ENCODE measurements at regions of chr12 and their contacts with region 1.

Region 1: GRCh38 chr12:95733141-95733825 is 57.3 kb downstream of the NTN4 start:
- DNase-seq: no peak
- H3K4me3 ChIP-seq: no peak overlapping the region
- H3K27ac ChIP-seq: no peak overlapping the region
- H3K4me1 ChIP-seq: no peaks in the 10 kb centered on the region
- H3K27me3 ChIP-seq: no peaks in the 10 kb centered on the region
- CTCF ChIP-seq: no peak
- EP300 ChIP-seq: no peak
- POLR2A ChIP-seq: no peak
- RAD21 ChIP-seq: no peak

Region 2: GRCh38 chr12:95304673-95305198 is 428.5 kb before region 1 on chr12:
- CTCF ChIA-PET with region 1: no interaction called
- POLR2A ChIA-PET with region 1: no interaction called
- DNase-seq: no peak
- H3K4me3 ChIP-seq: no peak overlapping the region
- H3K27ac ChIP-seq: no peak overlapping the region
- H3K4me1 ChIP-seq: no peaks in the 10 kb centered on the region
- H3K27me3 ChIP-seq: peaks cover 0 to 1% (median 0%) of the 10 kb centered on the region in 4 experiments; a peak in 1 of 7 replicates
- CTCF ChIP-seq: no peak
- EP300 ChIP-seq: no peak
- POLR2A ChIP-seq: no peak
- RAD21 ChIP-seq: no peak

Region 3: DNA sequence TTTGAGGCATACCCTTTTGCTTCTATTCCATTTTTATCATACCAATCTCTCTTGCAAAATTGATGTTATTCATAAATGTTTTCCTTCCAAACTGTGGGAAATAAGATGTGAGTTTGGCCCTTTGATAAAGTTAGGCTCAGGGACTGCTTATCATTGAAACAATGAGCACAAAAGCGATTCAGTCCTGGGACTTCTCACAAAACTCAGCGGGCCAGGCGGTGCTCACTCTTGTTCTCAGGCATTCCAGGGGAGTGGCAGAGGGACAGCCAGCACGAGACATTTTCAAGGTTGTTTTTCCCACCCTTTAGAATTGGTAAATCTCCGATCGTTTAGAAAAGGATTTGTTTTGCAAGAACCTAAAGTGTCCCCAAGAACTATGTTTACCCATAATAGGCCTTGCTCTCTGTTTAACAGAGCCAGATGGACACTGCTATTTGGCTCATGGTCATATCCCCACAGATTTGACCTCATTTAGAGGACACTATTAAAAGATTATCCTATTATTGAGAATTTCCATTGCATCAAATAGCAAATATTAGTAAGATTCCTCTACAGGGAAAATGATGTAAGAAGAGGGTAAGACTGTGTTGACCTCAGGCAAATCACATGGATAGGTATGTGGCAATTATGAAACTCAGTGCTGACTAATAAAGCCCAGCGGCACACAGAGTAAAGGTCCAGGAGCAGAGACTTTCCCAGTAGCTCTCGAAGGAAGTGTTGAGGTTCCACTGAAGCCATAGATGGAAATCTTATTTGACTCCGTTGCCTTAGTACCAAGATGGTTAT is 79.3 kb before region 1 on chr12:
- CTCF ChIA-PET with region 1: no interaction called
- POLR2A ChIA-PET with region 1: no interaction called
- DNase-seq: no peak
- H3K4me3 ChIP-seq: no peak overlapping the region
- H3K27ac ChIP-seq: no peak overlapping the region
- H3K4me1 ChIP-seq: no peaks in the 10 kb centered on the region
- H3K27me3 ChIP-seq: no peaks in the 10 kb centered on the region
- CTCF ChIP-seq: no peak
- EP300 ChIP-seq: no peak
- POLR2A ChIP-seq: no peak
- RAD21 ChIP-seq: no peak

Region 4: GRCh38 chr12:95721350-95721749 is 11.9 kb before region 1 on chr12:
- CTCF ChIA-PET with region 1: interaction called, 15 read pairs
- POLR2A ChIA-PET with region 1: no interaction called
- DNase-seq: no peak
- H3K4me3 ChIP-seq: no peak overlapping the region
- H3K27ac ChIP-seq: no peak overlapping the region
- H3K4me1 ChIP-seq: peaks cover 0 to 6% (median 0%) of the 10 kb centered on the region in 4 experiments; a peak in 1 of 7 replicates
- H3K27me3 ChIP-seq: no peaks in the 10 kb centered on the region
- CTCF ChIP-seq: peak in 2 of 3 experiments; percentile 6 to 35; a peak in 2 of 4 replicates
- EP300 ChIP-seq: no peak
- POLR2A ChIP-seq: no peak
- RAD21 ChIP-seq: peak in 1 of 2 experiments; percentile 20; a peak in 3 of 4 replicates

Region 5: DNA sequence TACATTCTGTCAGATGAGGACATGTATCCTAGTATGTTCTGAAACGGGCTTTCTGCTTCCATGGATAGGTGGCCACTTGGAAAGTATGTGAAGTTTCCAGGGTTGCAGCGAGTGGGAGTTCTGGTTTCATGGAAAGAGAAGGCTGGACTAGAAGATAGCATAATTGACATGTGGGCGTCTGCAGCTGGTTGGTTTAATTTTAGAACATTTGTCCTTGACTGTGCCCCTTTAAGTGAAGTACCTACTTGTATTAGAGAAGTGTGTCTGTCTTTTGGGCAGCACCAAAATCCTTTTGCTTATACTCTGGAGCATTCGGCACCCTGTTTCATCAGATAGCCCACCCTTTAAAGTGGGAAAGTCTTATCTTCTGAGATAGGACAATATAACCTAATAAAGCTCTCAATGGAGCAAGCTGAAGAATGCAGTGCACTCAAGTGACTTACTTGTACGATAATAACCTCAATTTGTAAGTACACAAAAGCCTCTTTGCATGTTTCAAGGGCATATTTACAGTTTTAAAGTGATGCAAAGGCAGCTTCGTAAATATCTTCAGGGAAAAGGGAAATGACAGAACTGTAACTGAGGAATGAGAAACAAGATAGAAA is 22.1 kb after region 1 on chr12:
- CTCF ChIA-PET with region 1: no interaction called
- POLR2A ChIA-PET with region 1: no interaction called
- DNase-seq: no peak
- H3K4me3 ChIP-seq: no peak overlapping the region
- H3K27ac ChIP-seq: no peak overlapping the region
- H3K4me1 ChIP-seq: peaks cover 0 to 6% (median 2%) of the 10 kb centered on the region in 4 experiments; a peak in 4 of 7 replicates
- H3K27me3 ChIP-seq: no peaks in the 10 kb centered on the region
- CTCF ChIP-seq: no peak
- EP300 ChIP-seq: no peak
- POLR2A ChIP-seq: no peak
- RAD21 ChIP-seq: no peak

Region 6: DNA sequence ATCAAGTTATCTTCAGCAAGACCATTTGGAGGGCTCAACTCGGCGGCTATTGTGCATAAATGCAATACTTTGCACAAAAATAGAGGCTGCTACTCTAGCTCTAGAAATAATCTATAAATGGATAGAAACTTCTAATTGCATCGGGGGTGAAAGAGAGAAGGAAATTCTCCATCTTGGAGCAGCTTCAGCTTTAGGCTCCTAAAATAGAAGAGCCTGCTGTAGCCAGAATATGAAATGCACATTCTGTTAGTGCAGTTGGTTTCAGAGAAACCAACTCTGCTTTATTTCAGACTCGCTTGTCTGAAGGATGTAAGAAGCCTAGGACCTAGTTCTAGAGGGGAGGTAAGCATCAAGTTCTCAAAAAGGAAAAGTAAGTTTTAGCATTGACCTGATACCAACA is 163.6 kb after region 1 on chr12:
- CTCF ChIA-PET with region 1: no interaction called
- POLR2A ChIA-PET with region 1: no interaction called
- DNase-seq: no peak
- H3K4me3 ChIP-seq: no peak overlapping the region
- H3K27ac ChIP-seq: no peak overlapping the region
- H3K4me1 ChIP-seq: no peaks in the 10 kb centered on the region
- H3K27me3 ChIP-seq: no peaks in the 10 kb centered on the region
- CTCF ChIP-seq: no peak
- EP300 ChIP-seq: no peak
- POLR2A ChIP-seq: no peak
- RAD21 ChIP-seq: no peak